PC-3 (cell line): ENCODE measurements at regions of chr3 and their contacts with region 1.

Region 1: DNA sequence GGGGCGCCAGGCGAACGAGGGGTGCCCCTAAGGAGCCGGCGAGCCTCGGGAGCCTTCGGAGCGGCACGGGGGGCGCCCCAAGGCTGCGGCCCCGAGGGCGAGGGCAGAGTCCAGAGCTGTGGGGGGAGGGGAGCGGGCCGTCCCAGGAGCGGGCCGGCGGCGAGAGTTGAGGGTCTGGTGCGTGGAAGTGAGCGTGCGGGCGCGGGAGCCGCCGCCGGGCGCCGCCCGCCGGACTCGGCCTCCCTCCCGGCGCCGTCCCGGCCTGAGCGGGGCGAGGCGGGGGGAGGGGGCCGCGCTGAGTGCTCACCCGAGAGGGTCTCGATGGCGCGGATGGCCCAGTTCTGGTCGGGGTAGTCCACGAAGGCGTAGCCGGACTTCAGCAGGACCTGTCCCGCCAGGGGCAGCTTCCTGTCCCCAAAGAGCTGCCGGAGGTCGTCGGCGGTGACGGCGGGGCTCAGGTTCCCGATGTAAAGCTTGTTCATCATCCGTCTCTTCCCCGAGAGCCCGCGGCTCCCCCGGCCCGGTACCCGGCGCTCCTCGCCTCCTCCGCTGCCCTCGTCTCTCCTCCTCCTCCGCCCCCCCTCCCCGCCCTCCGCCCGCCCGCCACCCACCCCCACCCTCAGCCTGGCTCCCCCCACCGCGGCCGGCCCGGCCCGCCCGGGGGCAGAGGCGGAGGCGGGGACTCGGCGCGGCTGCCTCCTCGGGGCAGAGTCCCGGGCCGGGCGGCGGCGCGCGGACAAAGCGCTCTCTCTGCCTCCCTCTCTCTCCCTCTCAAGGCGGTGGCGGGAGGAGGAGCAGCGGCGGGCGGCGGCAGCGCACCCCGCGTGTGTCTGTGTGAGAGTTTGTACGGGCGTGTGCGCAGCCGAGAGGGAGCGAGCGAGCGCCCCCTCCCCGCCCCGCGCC is at the start of gene IGF2BP2:
- DNase-seq: peak; percentile 81
- ATAC-seq: peak; percentile 68
- H3K4me3 ChIP-seq: peak within 1 kb of the TSS; percentile 85
- H3K27ac ChIP-seq: peak within 1 kb of the TSS; percentile 83
- H3K4me1 ChIP-seq: peaks cover 29% of the 10 kb centered on the region
- H3K27me3 ChIP-seq: no peaks in the 10 kb centered on the region
- CTCF ChIP-seq: no peak
- total RNA-seq, gene IGF2BP2: 81.2 and 105 TPM in 2 replicates

Region 2: GRCh38 chr3:185687271-185687878 is 137.4 kb before region 1 on chr3:
- CTCF ChIA-PET with region 1: no interaction called
- POLR2A ChIA-PET with region 1: no interaction called
- intact Hi-C with region 1: loop called (anchors 5 kb)
- DNase-seq: peak; percentile 72
- ATAC-seq: no peak
- H3K4me3 ChIP-seq: no peak overlapping the region
- H3K27ac ChIP-seq: peak overlapping the region; percentile 96
- H3K4me1 ChIP-seq: peaks cover 54% of the 10 kb centered on the region
- H3K27me3 ChIP-seq: no peaks in the 10 kb centered on the region
- CTCF ChIP-seq: no peak

Region 3: DNA sequence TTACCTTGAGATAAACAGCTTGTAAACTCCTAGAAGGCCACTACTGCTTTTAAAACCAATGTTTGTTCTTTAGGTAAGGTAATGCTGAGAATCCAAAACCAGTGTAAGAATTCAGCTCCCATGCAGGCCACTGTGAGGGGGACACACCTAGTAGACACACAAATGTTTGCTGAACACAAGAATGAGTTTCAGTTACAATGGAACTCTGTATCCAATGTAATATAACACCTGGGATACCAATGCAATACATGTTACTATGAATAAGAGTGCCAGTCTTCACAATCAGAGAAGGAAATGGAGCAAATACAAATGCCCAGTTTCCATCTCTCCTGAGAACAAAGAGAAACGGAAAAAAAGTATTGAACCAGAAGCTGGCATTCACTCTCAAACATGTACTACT is 65.8 kb before region 1 on chr3:
- CTCF ChIA-PET with region 1: no interaction called
- POLR2A ChIA-PET with region 1: interaction called, 5 read pairs
- intact Hi-C with region 1: loop called (anchors 1 kb)
- DNase-seq: peak; percentile 80
- ATAC-seq: peak; percentile 89
- H3K4me3 ChIP-seq: no peak overlapping the region
- H3K27ac ChIP-seq: peak overlapping the region; percentile 74
- H3K4me1 ChIP-seq: peaks cover 49% of the 10 kb centered on the region
- H3K27me3 ChIP-seq: no peaks in the 10 kb centered on the region
- CTCF ChIP-seq: no peak

Region 4: GRCh38 chr3:185789891-185790830 is 34.6 kb before region 1 on chr3:
- CTCF ChIA-PET with region 1: no interaction called
- POLR2A ChIA-PET with region 1: interaction called, 4 read pairs
- intact Hi-C with region 1: loop called (anchors 5 kb)
- DNase-seq: peak; percentile 62
- ATAC-seq: peak; percentile 56
- H3K4me3 ChIP-seq: 0 out of 2 replicates have a peak overlapping the region, but pooled peaks have one; percentile 0
- H3K27ac ChIP-seq: peak overlapping the region; percentile 71
- H3K4me1 ChIP-seq: peaks cover 60% of the 10 kb centered on the region
- H3K27me3 ChIP-seq: no peaks in the 10 kb centered on the region
- CTCF ChIP-seq: no peak

Region 5: DNA sequence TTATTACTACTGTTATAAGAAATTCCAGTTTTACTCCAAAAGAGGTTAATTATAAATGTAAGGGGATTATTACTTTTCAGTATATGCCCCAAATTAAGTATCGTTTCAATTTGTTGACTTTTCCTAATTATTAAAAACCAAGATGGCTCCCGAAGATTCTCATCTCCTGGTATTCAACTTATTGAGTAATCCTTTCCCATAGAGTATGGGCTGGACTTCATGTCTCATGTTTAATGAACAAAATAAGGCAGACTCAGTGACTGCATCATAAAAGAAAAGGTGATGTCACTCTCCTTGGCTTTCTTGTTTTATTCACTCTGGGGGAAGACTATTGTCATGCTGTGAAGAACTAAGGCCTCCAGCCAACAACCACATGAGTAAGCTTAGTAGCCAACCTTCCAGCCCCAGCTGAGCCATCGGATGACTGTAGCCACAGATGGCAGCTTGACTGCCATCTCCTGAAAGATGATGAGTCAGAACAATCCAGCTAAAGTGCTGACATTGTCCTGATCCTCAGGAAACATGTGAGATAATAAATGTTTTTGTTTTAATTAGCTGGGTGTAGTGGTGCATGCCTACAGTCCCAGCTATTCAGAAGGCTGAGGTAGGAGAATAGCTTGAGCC is 17.2 kb before region 1 on chr3:
- CTCF ChIA-PET with region 1: no interaction called
- POLR2A ChIA-PET with region 1: interaction called, 20 read pairs
- intact Hi-C with region 1: no loop called
- DNase-seq: peak; percentile 73
- ATAC-seq: peak; percentile 75
- H3K4me3 ChIP-seq: no peak overlapping the region
- H3K27ac ChIP-seq: no peak overlapping the region
- H3K4me1 ChIP-seq: no peaks in the 10 kb centered on the region
- H3K27me3 ChIP-seq: no peaks in the 10 kb centered on the region
- CTCF ChIP-seq: no peak